ENCODE measurements at regions of chr2 and their contacts with region 1.

Region 1: DNA sequence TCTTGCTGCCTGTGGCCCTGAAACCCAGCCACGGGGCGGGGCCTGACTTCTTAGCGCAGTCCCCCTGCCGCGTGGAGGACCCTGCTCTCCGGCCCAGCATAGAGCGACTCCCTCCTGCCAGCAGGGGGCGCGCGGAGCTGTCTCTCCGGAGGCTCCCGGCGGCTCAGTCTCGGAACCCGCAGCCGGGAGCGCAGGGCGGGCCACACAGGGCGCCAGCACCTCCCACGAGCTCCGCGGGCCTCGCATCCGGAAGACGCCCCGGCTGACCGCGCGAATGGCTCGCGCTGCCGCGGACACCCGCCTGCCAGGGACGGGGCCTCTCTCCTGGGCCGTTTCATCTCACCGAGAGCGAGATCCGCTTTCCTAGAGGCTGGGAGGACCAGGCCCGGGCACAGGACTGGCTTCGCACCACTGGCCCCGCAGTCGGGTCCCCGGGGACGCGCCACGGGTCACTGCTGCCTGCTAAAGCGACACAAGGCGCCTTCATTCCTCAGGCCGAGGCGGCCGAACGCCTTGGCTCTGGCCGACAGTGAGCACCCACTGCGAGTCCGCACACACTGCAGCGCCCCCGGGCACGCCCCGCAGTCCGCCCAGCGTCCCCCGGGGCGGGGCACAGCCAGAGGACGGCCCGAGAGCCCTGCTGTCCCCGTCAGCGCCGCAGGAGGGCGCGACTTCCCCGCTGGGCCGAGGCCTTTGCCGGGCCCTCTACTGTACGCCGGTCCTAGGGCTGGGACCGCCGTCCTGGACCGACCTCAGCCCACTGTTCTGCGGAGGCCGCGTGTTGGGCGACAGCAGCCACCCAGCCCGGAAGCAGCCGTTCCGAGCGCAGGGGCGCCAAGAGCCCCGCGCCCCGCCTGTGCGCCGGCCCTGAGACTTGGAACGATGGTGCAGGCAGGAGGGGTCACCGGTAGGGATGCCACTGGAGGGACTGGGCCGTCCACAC is 39.0 kb upstream of the ARHGEF4 start:
- DNase-seq: peak; percentile 90
- H3K4me3 ChIP-seq: peak overlapping the region; percentile 98
- H3K27ac ChIP-seq: peak overlapping the region; percentile 93
- H3K4me1 ChIP-seq: no peaks in the 10 kb centered on the region
- H3K27me3 ChIP-seq: no peaks in the 10 kb centered on the region
- CTCF ChIP-seq: peak; percentile 78

Region 2: GRCh38 chr2:130252880-130253645 is 544.7 kb before region 1 on chr2:
- intact Hi-C with region 1: no loop called
- DNase-seq: peak; percentile 82
- H3K4me3 ChIP-seq: peak overlapping the region; percentile 48
- H3K27ac ChIP-seq: peak overlapping the region; percentile 19
- H3K4me1 ChIP-seq: no peaks in the 10 kb centered on the region
- H3K27me3 ChIP-seq: no peaks in the 10 kb centered on the region
- CTCF ChIP-seq: no peak

Region 3: DNA sequence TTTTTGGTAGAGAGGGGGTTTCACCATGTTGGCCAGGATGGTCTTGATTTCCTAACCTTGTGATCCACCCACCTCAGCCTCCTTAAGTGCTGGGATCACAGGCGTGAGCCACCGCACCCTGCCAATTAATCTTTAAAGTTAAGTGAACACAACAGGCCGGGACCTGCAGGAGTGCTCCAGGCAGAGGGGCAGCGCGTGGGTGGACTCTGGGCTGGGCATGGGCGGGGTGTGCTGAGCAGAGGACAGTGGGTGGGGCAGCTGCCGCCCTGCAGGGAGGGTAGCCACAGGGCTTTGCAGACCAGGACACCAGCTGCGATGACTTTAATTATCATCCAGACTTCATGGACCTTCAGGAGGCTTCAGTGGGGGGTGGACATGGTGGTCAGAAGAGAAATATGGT is 77.7 kb before region 1 on chr2:
- intact Hi-C with region 1: no loop called
- DNase-seq: no peak
- H3K4me3 ChIP-seq: no peak overlapping the region
- H3K27ac ChIP-seq: no peak overlapping the region
- H3K4me1 ChIP-seq: no peaks in the 10 kb centered on the region
- H3K27me3 ChIP-seq: no peaks in the 10 kb centered on the region
- CTCF ChIP-seq: no peak

Region 4: GRCh38 chr2:130871843-130872740 is 74.3 kb after region 1 on chr2:
- intact Hi-C with region 1: loop called (anchors 1 kb)
- DNase-seq: no peak
- H3K4me3 ChIP-seq: no peak overlapping the region
- H3K27ac ChIP-seq: no peak overlapping the region
- H3K4me1 ChIP-seq: no peaks in the 10 kb centered on the region
- H3K27me3 ChIP-seq: no peaks in the 10 kb centered on the region
- CTCF ChIP-seq: no peak

Region 5: GRCh38 chr2:130920415-130921163 is 122.8 kb after region 1 on chr2:
- intact Hi-C with region 1: loop called (anchors 2 kb)
- DNase-seq: peak; percentile 78
- H3K4me3 ChIP-seq: no peak overlapping the region
- H3K27ac ChIP-seq: no peak overlapping the region
- H3K4me1 ChIP-seq: no peaks in the 10 kb centered on the region
- H3K27me3 ChIP-seq: peaks cover 5% of the 10 kb centered on the region
- CTCF ChIP-seq: peak; percentile 78